Endothelial cell of umbilical vein (primary cell): ENCODE measurements at regions of chrX and their contacts with region 1.

Region 1: GRCh38 chrX:53422086-53422860 is at the start of gene SMC1A:
- DNase-seq: peak; percentile 96
- H3K4me3 ChIP-seq: peak within 1 kb of the TSS; percentile 66 to 81 (median 80)
- H3K27ac ChIP-seq: peak within 1 kb of the TSS; percentile 88
- H3K4me1 ChIP-seq: peaks cover 12% of the 10 kb centered on the region
- H3K27me3 ChIP-seq: no peaks in the 10 kb centered on the region
- CTCF ChIP-seq: no peak
- POLR2A ChIP-seq: peak; percentile 83
- total RNA-seq, gene SMC1A: 72.5 and 75.9 TPM in 2 replicates

Region 2: GRCh38 chrX:53288189-53288588 is 134.1 kb before region 1 on chrX:
- CTCF ChIA-PET with region 1: no interaction called
- POLR2A ChIA-PET with region 1: no interaction called
- dilution Hi-C with region 1: no loop called
- intact Hi-C with region 1: no loop called
- DNase-seq: no peak
- H3K4me3 ChIP-seq: no peak overlapping the region
- H3K27ac ChIP-seq: no peak overlapping the region
- H3K4me1 ChIP-seq: peaks cover 10% of the 10 kb centered on the region
- H3K27me3 ChIP-seq: no peaks in the 10 kb centered on the region
- CTCF ChIP-seq: no peak
- POLR2A ChIP-seq: no peak

Region 3: DNA sequence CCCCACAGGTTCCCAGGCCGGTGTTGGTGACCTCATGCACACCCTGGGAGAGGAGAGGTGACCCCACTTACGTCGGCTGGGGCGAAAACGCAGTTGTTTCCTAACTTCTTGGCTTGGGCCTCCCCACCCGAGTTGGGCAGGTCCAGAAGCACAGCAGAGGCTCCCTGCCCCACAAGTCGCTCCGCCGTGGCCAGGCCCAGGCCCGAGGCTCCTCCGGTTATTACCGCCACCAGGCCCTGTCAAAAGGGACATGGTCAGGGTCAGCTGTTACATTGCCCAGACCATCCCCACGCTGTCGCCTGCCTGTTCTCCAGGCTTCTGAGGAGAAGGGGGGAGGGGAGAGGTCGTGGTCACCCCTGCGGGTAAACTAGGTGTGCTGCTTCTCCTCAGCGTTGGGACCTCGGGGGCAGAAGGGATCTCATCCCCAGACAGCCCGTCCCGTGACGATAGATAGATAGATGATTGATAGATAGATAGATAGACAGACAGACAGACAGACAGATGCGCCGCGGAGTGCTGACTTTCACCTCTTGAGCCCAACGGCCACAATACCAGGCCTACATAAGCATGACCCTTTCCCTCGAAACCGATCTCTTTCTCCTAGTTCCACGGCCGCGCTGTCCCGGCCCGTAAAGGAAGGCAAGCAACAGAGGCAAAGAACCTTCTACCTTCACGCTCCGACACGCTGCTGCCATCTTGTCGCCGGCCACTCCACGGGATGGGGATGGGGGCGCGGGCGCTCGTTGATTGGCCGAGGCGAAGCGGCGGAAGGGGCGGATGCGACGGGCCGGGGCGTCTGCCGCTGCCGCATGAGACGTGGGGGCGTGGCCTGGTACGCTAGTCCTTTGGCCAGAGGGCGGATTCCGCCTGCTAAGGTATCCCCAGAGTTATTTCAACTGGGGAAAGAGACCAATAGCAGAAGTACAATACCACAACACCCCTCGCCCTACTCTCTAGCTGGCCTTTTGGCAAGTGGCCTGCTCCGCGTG is 11.7 kb after region 1 on chrX and contains the start of gene HSD17B10:
- CTCF ChIA-PET with region 1: interaction called, 15 read pairs
- POLR2A ChIA-PET with region 1: interaction called, 3 read pairs
- dilution Hi-C with region 1: no loop called
- intact Hi-C with region 1: loop called (anchors 1 kb)
- DNase-seq: peak; percentile 81
- H3K4me3 ChIP-seq: peak within 1 kb of the TSS; percentile 44 to 82 (median 52)
- H3K27ac ChIP-seq: peak within 1 kb of the TSS; percentile 51
- H3K4me1 ChIP-seq: peaks cover 2% of the 10 kb centered on the region
- H3K27me3 ChIP-seq: no peaks in the 10 kb centered on the region
- CTCF ChIP-seq: no peak
- POLR2A ChIP-seq: peak; percentile 76
- total RNA-seq, gene HSD17B10: 81.4 and 82.3 TPM in 2 replicates

Region 4: GRCh38 chrX:53441531-53442321 is 19.5 kb after region 1 on chrX:
- CTCF ChIA-PET with region 1: interaction called, 16 read pairs
- POLR2A ChIA-PET with region 1: no interaction called
- dilution Hi-C with region 1: no loop called
- intact Hi-C with region 1: loop called (anchors 2 kb)
- DNase-seq: peak; percentile 58
- H3K4me3 ChIP-seq: peak overlapping the region in 2 of 3 experiments; percentile 35 to 52
- H3K27ac ChIP-seq: no peak overlapping the region
- H3K4me1 ChIP-seq: peaks cover 7% of the 10 kb centered on the region
- H3K27me3 ChIP-seq: no peaks in the 10 kb centered on the region
- CTCF ChIP-seq: no peak
- POLR2A ChIP-seq: no peak